CD8-positive, alpha-beta T cell (primary cell): ENCODE measurements at regions of chr7 and their contacts with region 1.

Region 1: DNA sequence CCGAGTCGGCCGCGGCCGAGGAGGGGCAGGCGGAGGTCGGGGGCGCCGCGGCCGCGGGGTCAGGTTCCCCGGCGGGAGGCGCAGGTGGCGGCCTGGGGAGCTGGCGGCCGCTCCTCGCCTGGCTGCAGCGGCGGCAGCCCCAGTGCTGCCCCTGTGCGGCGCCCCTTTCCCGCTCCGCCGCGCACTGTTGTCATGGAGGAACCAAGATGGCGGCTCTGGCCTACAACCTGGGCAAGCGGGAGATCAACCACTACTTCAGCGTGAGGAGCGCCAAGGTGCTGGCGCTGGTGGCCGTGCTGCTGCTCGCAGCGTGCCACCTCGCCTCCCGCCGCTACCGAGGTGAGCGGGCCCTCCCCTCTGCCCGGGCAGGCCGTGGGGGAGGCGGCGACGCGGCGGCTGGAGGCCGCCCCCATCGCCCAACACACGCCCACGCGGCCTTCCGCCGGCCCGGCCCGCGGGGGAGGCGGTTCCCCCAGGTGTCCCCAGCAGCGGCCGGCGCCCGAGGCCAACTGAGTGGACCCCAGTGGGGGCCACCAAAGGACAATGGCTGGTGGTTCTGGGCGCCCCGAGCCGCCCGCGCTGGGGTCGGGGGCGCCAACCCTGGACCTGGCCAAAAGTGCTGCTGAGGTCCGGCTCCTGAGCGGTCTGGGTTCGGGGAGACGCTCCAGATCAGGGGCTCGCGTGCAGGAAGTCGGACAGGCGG is 421 bp downstream of the CASD1 start:
- DNase-seq: peak; percentile 33 to 84 (median 68)
- ATAC-seq: peak; percentile 75
- H3K4me3 ChIP-seq: peak overlapping the region; percentile 78 to 79
- H3K4me3 Mint-ChIP-seq: peak overlapping the region; percentile 87
- H3K27ac ChIP-seq: peak overlapping the region; percentile 75 to 89
- H3K27ac Mint-ChIP-seq: peak overlapping the region; percentile 94
- H3K4me1 ChIP-seq: peaks cover 37% of the 10 kb centered on the region
- H3K4me1 Mint-ChIP-seq: peaks cover 47% of the 10 kb centered on the region
- H3K27me3 ChIP-seq: no peaks in the 10 kb centered on the region
- H3K27me3 Mint-ChIP-seq: no peaks in the 10 kb centered on the region
- CTCF ChIP-seq: no peak

Region 2: DNA sequence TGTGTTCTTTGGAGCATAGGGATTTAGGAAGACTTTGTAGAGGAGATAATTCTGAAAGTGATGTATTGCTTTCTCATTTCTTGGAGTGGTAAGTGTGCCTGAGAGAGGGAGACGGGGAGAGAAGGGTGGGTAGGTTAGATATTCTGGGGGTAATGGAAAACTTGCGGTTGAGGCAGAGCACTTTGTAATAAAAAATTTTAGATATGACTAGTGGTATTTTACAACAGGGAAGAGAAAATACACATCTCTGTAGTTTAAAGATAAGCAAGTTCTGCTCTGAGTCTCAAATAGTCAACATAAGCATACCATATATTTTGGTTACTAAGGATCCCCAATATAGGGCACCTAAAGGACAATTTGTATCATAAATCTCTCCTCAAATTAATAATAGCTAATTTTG is 1271.3 kb before region 1 on chr7:
- CTCF ChIA-PET with region 1: no interaction called
- POLR2A ChIA-PET with region 1: no interaction called
- intact Hi-C with region 1: loop called (anchors 5 kb)
- DNase-seq: no peak
- ATAC-seq: no peak
- H3K4me3 ChIP-seq: no peak overlapping the region
- H3K4me3 Mint-ChIP-seq: no peak overlapping the region
- H3K27ac ChIP-seq: no peak overlapping the region
- H3K27ac Mint-ChIP-seq: no peak overlapping the region
- H3K4me1 ChIP-seq: peaks cover 2% of the 10 kb centered on the region
- H3K4me1 Mint-ChIP-seq: peaks cover 7% of the 10 kb centered on the region
- H3K27me3 ChIP-seq: no peaks in the 10 kb centered on the region
- H3K27me3 Mint-ChIP-seq: no peaks in the 10 kb centered on the region
- CTCF ChIP-seq: no peak

Region 3: GRCh38 chr7:94004024-94004951 is 505.7 kb before region 1 on chr7 and contains the start of gene BET1:
- CTCF ChIA-PET with region 1: no interaction called
- POLR2A ChIA-PET with region 1: no interaction called
- intact Hi-C with region 1: loop called (anchors 2 to 5 kb)
- DNase-seq: peak; percentile 84 to 98 (median 93)
- ATAC-seq: peak; percentile 93
- H3K4me3 ChIP-seq: peak within 1 kb of the TSS; percentile 84 to 91
- H3K4me3 Mint-ChIP-seq: peak within 1 kb of the TSS; percentile 99
- H3K27ac ChIP-seq: peak within 1 kb of the TSS; percentile 90
- H3K27ac Mint-ChIP-seq: peak within 1 kb of the TSS; percentile 99
- H3K4me1 ChIP-seq: peaks cover 11% of the 10 kb centered on the region
- H3K4me1 Mint-ChIP-seq: peaks cover 40% of the 10 kb centered on the region
- H3K27me3 ChIP-seq: no peaks in the 10 kb centered on the region
- H3K27me3 Mint-ChIP-seq: peaks cover 4% of the 10 kb centered on the region
- CTCF ChIP-seq: no peak
- total RNA-seq, gene BET1: 6.2 TPM

Region 4: GRCh38 chr7:94525923-94526322 is 15.9 kb after region 1 on chr7:
- CTCF ChIA-PET with region 1: no interaction called
- POLR2A ChIA-PET with region 1: no interaction called
- intact Hi-C with region 1: loop called in 1 of 2 experiments (anchors 2 kb)
- DNase-seq: no peak
- ATAC-seq: no peak
- H3K4me3 ChIP-seq: no peak overlapping the region
- H3K4me3 Mint-ChIP-seq: no peak overlapping the region
- H3K27ac ChIP-seq: no peak overlapping the region
- H3K27ac Mint-ChIP-seq: no peak overlapping the region
- H3K4me1 ChIP-seq: no peaks in the 10 kb centered on the region
- H3K4me1 Mint-ChIP-seq: no peaks in the 10 kb centered on the region
- H3K27me3 ChIP-seq: no peaks in the 10 kb centered on the region
- H3K27me3 Mint-ChIP-seq: no peaks in the 10 kb centered on the region
- CTCF ChIP-seq: no peak

Region 5: DNA sequence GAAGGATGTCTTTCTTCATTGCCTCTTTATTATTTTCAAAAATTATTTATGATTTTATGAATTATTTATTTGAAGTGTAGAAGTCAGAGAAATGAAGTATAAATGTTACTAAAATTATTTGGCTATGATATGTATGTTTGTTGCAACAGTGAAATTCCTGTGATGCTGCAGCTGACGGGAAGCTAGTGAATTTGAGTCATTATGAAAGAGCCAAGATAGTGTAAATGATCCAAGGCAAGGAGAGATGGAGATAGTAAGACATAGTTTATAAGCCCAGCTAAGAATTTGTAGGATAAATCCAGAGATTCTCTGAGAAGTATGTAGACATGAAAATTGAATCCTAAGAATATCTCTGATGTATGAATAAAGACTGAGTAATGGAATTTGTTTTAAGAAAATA is 30.4 kb after region 1 on chr7:
- CTCF ChIA-PET with region 1: no interaction called
- POLR2A ChIA-PET with region 1: no interaction called
- intact Hi-C with region 1: no loop called
- DNase-seq: no peak
- ATAC-seq: no peak
- H3K4me3 ChIP-seq: no peak overlapping the region
- H3K4me3 Mint-ChIP-seq: no peak overlapping the region
- H3K27ac ChIP-seq: no peak overlapping the region
- H3K27ac Mint-ChIP-seq: no peak overlapping the region
- H3K4me1 ChIP-seq: no peaks in the 10 kb centered on the region
- H3K4me1 Mint-ChIP-seq: no peaks in the 10 kb centered on the region
- H3K27me3 ChIP-seq: no peaks in the 10 kb centered on the region
- H3K27me3 Mint-ChIP-seq: no peaks in the 10 kb centered on the region
- CTCF ChIP-seq: no peak